CD14-positive monocyte (primary cell): ENCODE measurements at regions of chr10 and their contacts with region 1.

Region 1: GRCh38 chr10:31928549-31929260 is at the start of gene ARHGAP12:
- DNase-seq: peak; percentile 65 to 82 (median 74)
- H3K4me3 ChIP-seq: peak within 1 kb of the TSS; percentile 82 to 94 (median 92)
- H3K4me3 Mint-ChIP-seq: peak within 1 kb of the TSS; percentile 91 to 95
- H3K27ac ChIP-seq: peak within 1 kb of the TSS; percentile 72 to 90
- H3K27ac Mint-ChIP-seq: peak within 1 kb of the TSS; percentile 86 to 93 (median 92)
- H3K4me1 ChIP-seq: peaks cover 28 to 38% of the 10 kb centered on the region in 2 donors
- H3K4me1 Mint-ChIP-seq: peaks cover 35% of the 10 kb centered on the region
- H3K27me3 ChIP-seq: no peaks in the 10 kb centered on the region
- H3K27me3 Mint-ChIP-seq: peaks cover 0 to 8% (median 4%) of the 10 kb centered on the region in 3 donors
- CTCF ChIP-seq: no peak
- polyA plus RNA-seq, gene ARHGAP12: 3.2 to 15.5 (median 4.7) TPM

Region 2: DNA sequence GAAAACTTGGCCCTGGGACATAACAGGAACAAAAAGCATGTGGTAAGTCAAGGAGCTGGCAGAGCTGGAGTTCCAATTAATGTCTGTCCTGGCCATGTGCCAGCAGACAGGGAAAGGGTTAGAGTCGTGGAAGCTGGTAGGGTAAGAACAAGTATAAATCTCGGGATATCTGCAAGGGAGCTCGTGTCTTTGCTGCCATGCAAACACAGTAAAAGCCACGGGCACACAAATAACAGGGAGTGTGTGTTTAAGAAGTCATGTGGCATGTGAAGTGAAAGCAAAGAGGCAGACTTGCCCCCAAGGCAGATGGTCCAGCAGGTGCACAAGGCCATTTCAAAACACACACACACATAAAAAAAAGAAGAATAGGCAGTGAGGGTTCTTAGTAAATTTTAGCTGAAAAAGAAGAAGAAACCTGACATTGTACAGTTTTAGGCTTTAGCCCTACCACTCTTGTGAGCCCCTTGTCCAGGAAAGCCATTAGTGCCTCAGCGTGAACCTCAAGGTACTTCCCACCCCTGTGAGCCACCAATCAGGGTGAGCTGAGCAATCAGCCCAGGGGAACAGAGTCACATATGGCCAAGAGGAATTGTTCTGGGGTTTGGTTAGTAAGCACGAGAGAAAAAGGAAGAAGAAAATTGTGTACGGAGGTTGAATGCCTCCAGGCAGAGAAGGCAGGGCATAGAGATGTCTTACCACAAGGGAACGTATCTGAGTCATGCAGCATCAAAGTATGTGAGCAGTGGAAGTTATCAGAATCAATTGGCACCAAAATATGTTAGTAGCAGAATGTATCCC is 32.8 kb after region 1 on chr10:
- intact Hi-C with region 1: loop called in 1 of 2 experiments (anchors 5 kb)
- DNase-seq: peak; percentile 80 to 87 (median 86)
- H3K4me3 ChIP-seq: peak overlapping the region in 1 of 3 experiments; percentile 52
- H3K4me3 Mint-ChIP-seq: peak overlapping the region; percentile 54 to 62
- H3K27ac ChIP-seq: peak overlapping the region; percentile 11 to 52
- H3K27ac Mint-ChIP-seq: peak overlapping the region; percentile 19 to 85 (median 73)
- H3K4me1 ChIP-seq: peaks cover 72 to 88% of the 10 kb centered on the region in 2 donors
- H3K4me1 Mint-ChIP-seq: peaks cover 76% of the 10 kb centered on the region
- H3K27me3 ChIP-seq: no peaks in the 10 kb centered on the region
- H3K27me3 Mint-ChIP-seq: peaks cover 0 to 3% (median 1%) of the 10 kb centered on the region in 3 donors
- CTCF ChIP-seq: peak; percentile 15

Region 3: GRCh38 chr10:31977440-31978155 is 48.9 kb after region 1 on chr10:
- intact Hi-C with region 1: loop called (anchors 1 to 5 kb)
- DNase-seq: peak; percentile 85 to 92 (median 90)
- H3K4me3 ChIP-seq: peak overlapping the region in 2 of 3 experiments; percentile 41 to 71
- H3K4me3 Mint-ChIP-seq: peak overlapping the region; percentile 71 to 91
- H3K27ac ChIP-seq: peak overlapping the region in 1 of 2 donors; percentile 90
- H3K27ac Mint-ChIP-seq: peak overlapping the region; percentile 94 to 99 (median 97)
- H3K4me1 ChIP-seq: peaks cover 44 to 57% of the 10 kb centered on the region in 2 donors
- H3K4me1 Mint-ChIP-seq: peaks cover 47% of the 10 kb centered on the region
- H3K27me3 ChIP-seq: peaks cover 5 to 6% of the 10 kb centered on the region in 2 donors
- H3K27me3 Mint-ChIP-seq: peaks cover 15 to 40% (median 32%) of the 10 kb centered on the region in 3 donors
- CTCF ChIP-seq: no peak

Region 4: DNA sequence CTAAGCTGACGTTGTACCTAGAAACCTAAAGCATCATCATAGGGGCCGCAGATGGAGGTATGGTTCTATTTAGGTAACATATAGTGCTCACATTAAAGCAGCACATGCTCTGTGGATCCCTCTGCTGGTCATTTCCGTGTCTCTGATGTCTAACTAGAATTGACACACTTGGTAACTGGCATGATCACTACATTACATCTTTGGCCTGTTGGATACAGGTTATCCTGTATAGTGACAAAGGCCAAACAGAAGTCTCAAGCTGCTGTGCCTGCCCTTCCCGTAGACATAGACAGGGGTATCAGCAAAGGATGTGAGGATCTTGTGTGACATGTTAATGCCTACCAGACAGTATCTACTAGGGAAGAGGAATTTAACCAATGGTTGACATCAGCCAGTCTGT is 76.3 kb after region 1 on chr10:
- intact Hi-C with region 1: loop called in 1 of 2 experiments (anchors 5 kb)
- DNase-seq: peak; percentile 38 to 62 (median 49)
- H3K4me3 ChIP-seq: no peak overlapping the region
- H3K4me3 Mint-ChIP-seq: no peak overlapping the region
- H3K27ac ChIP-seq: no peak overlapping the region
- H3K27ac Mint-ChIP-seq: no peak overlapping the region
- H3K4me1 ChIP-seq: peaks cover 2 to 8% of the 10 kb centered on the region in 2 donors
- H3K4me1 Mint-ChIP-seq: peaks cover 15% of the 10 kb centered on the region
- H3K27me3 ChIP-seq: no peaks in the 10 kb centered on the region
- H3K27me3 Mint-ChIP-seq: peaks cover 0 to 3% (median 0%) of the 10 kb centered on the region in 3 donors
- CTCF ChIP-seq: peak; percentile 77

Region 5: DNA sequence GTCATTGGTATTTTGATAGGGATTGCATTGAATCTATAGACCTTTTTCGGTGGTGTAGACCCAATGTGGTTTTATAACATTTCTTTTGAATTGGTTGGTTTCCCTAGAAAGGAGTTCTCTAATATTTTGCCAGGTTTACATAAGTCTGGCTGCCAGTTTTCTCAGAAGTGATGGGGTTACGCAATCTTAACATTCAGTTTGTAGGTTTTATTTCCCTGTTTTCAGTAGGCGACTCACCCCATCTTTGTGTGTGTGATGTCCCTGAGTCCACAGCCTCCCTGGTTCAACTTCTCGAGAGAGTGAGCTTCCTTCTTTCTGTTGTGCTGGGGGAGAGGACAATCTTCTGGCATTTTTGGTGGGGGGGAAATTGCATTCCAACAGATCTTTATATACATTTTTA is 137.2 kb after region 1 on chr10:
- intact Hi-C with region 1: no loop called
- DNase-seq: peak; percentile 64 to 83 (median 81)
- H3K4me3 ChIP-seq: no peak overlapping the region
- H3K4me3 Mint-ChIP-seq: peak overlapping the region in 1 of 2 donors; percentile 35
- H3K27ac ChIP-seq: peak overlapping the region in 1 of 2 donors; percentile 4
- H3K27ac Mint-ChIP-seq: peak overlapping the region in 6 of 7 donors; percentile 1 to 86 (median 46)
- H3K4me1 ChIP-seq: peaks cover 13 to 15% of the 10 kb centered on the region in 2 donors
- H3K4me1 Mint-ChIP-seq: peaks cover 11% of the 10 kb centered on the region
- H3K27me3 ChIP-seq: no peaks in the 10 kb centered on the region
- H3K27me3 Mint-ChIP-seq: no peaks in the 10 kb centered on the region
- CTCF ChIP-seq: no peak